Breast epithelium (tissue), 4 donors: ENCODE measurements at regions of chr6 and their contacts with region 1.

Region 1: DNA sequence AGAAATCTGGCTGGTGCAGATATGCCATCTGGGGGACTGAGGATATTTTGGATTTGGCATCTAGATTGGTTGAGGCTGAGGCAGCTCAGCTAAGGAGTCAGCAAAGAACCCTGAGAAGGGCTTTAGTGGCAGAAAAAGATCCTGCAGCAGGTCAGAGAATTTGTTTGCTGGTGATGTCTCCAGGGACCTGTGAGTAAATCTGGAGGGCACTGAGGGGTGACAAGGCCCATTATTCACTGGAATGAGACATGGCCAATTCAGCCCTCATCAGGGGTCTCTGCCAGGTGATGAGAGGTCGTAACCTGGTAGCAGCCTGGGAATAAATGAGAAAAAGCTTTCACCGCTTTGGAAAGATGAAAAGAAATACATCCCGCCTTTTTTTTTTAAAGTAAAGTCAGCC is 118.3 kb upstream of the FBXL4 start:
- DNase-seq: no peak
- H3K4me3 ChIP-seq: no peak overlapping the region
- H3K27ac ChIP-seq: no peak overlapping the region
- H3K4me1 ChIP-seq: no peaks in the 10 kb centered on the region
- H3K27me3 ChIP-seq: no peaks in the 10 kb centered on the region
- CTCF ChIP-seq: no peak
- POLR2A ChIP-seq: no peak

Region 2: DNA sequence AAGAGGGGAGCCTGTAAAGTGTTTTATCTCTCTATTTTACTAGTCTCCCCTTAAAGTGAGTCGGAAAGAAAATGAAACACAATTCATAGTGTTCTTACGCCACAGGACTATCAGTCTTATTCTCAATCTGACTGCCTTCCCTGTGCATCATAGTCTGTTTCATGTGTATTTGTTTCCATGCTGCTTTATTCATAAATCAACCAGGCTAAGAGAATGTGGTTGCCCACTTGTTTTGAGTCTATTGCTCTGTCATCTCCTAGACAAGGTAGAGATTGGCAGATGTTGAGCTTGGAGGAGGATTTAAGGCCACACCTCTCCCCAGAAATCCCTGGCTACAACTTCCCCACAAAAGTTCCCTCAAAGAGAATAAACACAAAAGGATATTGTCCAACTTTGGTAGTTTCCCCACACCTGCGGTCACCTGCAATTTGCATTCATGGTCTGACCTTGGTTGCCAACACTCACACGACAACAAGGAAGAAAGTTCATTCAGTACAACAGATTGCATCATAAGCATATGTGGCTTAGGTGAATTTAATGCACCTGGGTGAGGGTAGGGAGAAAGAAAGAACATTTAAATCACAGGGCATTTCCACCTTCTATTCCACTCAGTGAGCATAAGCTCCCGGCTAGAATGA is 48.8 kb after region 1 on chr6:
- intact Hi-C with region 1: loop called (anchors 2 kb)
- DNase-seq: peak in 1 of 2 donors; percentile 60
- H3K4me3 ChIP-seq: no peak overlapping the region
- H3K27ac ChIP-seq: no peak overlapping the region
- H3K4me1 ChIP-seq: no peaks in the 10 kb centered on the region
- H3K27me3 ChIP-seq: peaks cover 0 to 6% of the 10 kb centered on the region in 2 donors
- CTCF ChIP-seq: no peak
- POLR2A ChIP-seq: no peak